RWPE1 (cell line): ENCODE measurements at regions of chr15 and their contacts with region 1.

Region 1: GRCh38 chr15:32844118-32844711 is 126.4 kb downstream of the GREM1 start:
- DNase-seq: peak; percentile 30
- H3K27ac ChIP-seq: no peak overlapping the region
- CTCF ChIP-seq: peak; percentile 77

Region 2: GRCh38 chr15:32663671-32664070 is 180.5 kb before region 1 on chr15:
- CTCF ChIA-PET with region 1: interaction called, 17 read pairs
- POLR2A ChIA-PET with region 1: interaction called, 4 read pairs
- DNase-seq: no peak
- H3K27ac ChIP-seq: no peak overlapping the region
- CTCF ChIP-seq: no peak

Region 3: GRCh38 chr15:32834156-32834555 is 10.1 kb before region 1 on chr15:
- CTCF ChIA-PET with region 1: interaction called, 17 read pairs
- POLR2A ChIA-PET with region 1: no interaction called
- DNase-seq: no peak
- H3K27ac ChIP-seq: no peak overlapping the region
- CTCF ChIP-seq: no peak